ENCODE measurements at regions of chr7 and their contacts with region 1.

Region 1: DNA sequence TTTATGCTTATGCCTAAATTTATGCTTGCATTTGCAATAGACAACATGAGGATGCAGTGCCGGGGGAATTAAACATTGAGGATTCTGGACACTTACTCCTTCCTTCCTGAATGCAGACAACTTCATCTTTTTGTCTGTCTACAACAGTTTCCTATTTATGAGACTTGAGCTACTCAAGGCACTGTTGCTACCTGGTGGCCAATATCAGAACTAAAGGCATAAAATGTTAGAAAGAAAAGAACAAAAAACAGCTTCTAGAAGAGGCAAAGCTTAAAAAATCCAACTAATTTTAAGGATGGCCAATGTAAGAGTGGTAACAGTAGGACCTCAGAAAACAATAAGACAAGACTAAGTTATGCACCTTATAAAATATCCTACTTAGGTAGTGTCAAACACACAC is 144.5 kb upstream of the PTN start:
- DNase-seq: no peak
- H3K4me3 ChIP-seq: no peak overlapping the region
- CTCF ChIP-seq: peak; percentile 39

Region 2: GRCh38 chr7:137434947-137435346 is 53.1 kb before region 1 on chr7:
- in situ Hi-C with region 1: no loop called
- DNase-seq: no peak
- H3K4me3 ChIP-seq: no peak overlapping the region
- CTCF ChIP-seq: no peak

Region 3: GRCh38 chr7:137519947-137520346 is 31.9 kb after region 1 on chr7:
- in situ Hi-C with region 1: loop called (anchors 5 kb)
- DNase-seq: no peak
- H3K4me3 ChIP-seq: no peak overlapping the region
- CTCF ChIP-seq: no peak